ENCODE measurements at regions of chr2 and their contacts with region 1.

Region 1: DNA sequence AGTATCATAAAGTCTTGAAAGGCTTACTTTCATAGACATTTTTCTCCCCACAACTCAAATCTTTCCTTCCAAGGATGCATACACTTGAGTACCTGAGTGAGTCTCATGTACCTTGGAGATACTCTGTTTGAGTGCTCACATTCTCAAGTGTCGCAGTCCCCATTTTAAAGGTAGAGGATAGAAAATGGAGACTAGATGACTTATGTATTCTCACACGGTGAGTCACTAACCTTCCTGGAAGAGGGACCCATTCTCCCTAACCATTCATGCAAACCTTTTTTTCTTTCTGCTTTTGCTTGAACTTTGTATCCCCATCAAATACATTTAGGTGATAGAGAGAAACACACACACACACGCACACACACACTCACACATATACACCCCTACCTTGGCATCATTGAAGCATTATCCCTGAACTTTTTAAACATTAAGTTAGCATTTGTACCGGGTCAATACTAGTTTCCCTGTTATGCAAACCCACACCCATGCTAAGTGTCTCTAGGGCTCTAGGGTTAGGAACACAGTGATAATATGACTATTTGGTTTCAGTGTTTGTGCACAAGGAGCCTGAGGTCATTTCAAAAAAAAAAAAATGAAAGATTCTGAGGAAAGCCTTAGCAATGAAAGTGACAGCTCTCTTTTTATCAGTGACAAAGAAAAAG is 236.2 kb downstream of the IKZF2 start:
- DNase-seq: no peak
- H3K4me3 Mint-ChIP-seq: no peak overlapping the region
- H3K27ac Mint-ChIP-seq: peak overlapping the region; percentile 66
- H3K4me1 Mint-ChIP-seq: peaks cover 12% of the 10 kb centered on the region
- H3K27me3 Mint-ChIP-seq: peaks cover 5% of the 10 kb centered on the region

Region 2: GRCh38 chr2:212421556-212422334 is 493.5 kb before region 1 on chr2:
- CTCF ChIA-PET with region 1: no interaction called
- POLR2A ChIA-PET with region 1: no interaction called
- intact Hi-C with region 1: no loop called
- DNase-seq: no peak
- H3K4me3 Mint-ChIP-seq: no peak overlapping the region
- H3K27ac Mint-ChIP-seq: no peak overlapping the region
- H3K4me1 Mint-ChIP-seq: no peaks in the 10 kb centered on the region
- H3K27me3 Mint-ChIP-seq: no peaks in the 10 kb centered on the region

Region 3: GRCh38 chr2:212928681-212929080 is 13.4 kb after region 1 on chr2:
- CTCF ChIA-PET with region 1: no interaction called
- POLR2A ChIA-PET with region 1: no interaction called
- intact Hi-C with region 1: loop called (anchors 1 kb)
- DNase-seq: no peak
- H3K4me3 Mint-ChIP-seq: no peak overlapping the region
- H3K27ac Mint-ChIP-seq: no peak overlapping the region
- H3K4me1 Mint-ChIP-seq: peaks cover 6% of the 10 kb centered on the region
- H3K27me3 Mint-ChIP-seq: no peaks in the 10 kb centered on the region

Region 4: DNA sequence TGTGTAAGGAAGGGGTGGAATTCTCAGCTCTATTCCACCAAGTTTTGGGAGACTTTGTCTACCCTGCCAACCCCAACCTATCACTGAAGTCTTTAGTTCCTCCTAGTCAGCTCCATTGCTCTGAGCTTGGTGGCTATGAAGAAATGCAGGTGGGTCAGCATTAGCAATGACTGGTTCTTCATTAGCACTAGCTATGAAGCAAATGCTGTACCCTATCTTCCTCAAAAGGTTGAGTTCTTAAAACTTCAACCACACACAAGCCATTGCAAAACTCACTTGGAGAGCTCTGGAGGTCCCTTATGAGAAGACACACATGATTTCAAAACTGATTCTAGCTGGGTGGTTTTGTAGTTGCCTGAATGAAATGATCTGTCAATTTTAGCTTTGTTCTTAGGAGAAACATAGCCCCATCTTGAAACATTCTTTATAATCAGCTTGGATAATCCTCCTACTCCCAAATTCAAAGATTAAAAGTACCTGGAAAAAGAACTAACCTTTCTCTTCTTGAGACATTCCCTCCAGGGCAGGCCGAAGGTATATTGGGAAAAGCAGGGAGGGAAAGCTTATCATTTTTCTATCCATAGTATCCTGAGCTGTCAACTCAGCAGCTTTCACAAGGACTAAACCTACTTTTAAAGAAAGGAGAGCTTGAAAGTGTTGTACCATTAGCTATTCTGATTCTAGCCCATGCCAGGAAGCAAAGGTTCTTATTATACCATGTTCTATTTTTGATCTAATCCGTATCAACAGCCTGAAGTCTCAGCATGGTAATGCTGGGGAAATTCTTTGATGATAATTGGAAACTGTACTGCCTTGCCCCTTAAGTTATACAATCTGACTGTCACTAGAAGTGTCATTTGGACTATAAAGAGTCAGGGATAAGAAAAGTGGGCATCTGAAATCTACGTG is 42.6 kb after region 1 on chr2:
- CTCF ChIA-PET with region 1: no interaction called
- POLR2A ChIA-PET with region 1: no interaction called
- intact Hi-C with region 1: loop called (anchors 1 kb)
- DNase-seq: no peak
- H3K4me3 Mint-ChIP-seq: peak overlapping the region; percentile 7
- H3K27ac Mint-ChIP-seq: peak overlapping the region; percentile 53
- H3K4me1 Mint-ChIP-seq: peaks cover 26% of the 10 kb centered on the region
- H3K27me3 Mint-ChIP-seq: no peaks in the 10 kb centered on the region

Region 5: GRCh38 chr2:212968280-212968679 is 53.0 kb after region 1 on chr2:
- CTCF ChIA-PET with region 1: no interaction called
- POLR2A ChIA-PET with region 1: no interaction called
- intact Hi-C with region 1: loop called (anchors 1 kb)
- DNase-seq: peak; percentile 13
- H3K4me3 Mint-ChIP-seq: no peak overlapping the region
- H3K27ac Mint-ChIP-seq: peak overlapping the region; percentile 44
- H3K4me1 Mint-ChIP-seq: peaks cover 7% of the 10 kb centered on the region
- H3K27me3 Mint-ChIP-seq: no peaks in the 10 kb centered on the region

Region 6: DNA sequence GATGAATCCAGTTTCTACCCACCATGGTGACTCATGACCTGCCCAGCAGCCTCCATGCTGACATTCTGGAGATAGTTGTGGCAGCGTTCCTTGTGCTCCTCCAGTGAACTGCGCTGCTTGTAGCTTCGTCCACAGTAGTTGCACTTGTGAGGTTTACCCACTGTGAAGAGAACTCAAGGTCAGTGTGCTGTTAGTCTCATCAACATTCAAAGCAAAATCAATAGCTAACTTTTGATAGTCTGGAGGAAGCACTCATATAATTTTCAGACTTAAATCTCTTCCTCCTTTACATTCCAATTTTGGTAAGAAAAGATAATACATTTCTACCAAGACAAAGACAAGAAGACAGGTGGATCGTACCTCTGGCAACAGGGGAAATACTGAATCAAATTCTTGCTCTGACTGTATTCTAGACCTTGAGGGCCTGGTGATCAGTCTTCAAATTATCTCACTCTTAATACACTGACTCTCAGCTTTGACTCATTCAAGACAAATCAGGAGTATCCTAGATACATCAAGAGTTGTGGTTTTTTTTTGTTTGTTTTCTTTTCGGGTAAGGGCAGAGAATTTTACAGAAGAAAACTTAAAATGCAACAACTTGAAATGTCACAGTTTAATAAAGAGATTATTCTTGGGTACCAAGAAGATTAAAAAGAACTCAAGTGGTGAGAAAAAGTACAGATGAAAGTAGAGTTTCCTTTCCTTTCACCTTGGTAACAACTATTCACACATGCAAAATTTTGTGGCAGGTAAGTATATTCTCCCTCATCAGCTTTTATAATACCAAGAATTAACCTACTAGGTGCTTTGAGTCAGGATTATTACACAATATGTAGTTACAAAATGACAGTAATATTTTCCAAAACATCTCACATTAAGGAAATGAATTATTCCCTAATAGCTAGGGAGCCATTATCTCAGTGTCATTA is 107.0 kb after region 1 on chr2:
- CTCF ChIA-PET with region 1: no interaction called
- POLR2A ChIA-PET with region 1: no interaction called
- intact Hi-C with region 1: loop called (anchors 1 kb)
- DNase-seq: peak; percentile 24
- H3K4me3 Mint-ChIP-seq: no peak overlapping the region
- H3K27ac Mint-ChIP-seq: peak overlapping the region; percentile 0
- H3K4me1 Mint-ChIP-seq: peaks cover 16% of the 10 kb centered on the region
- H3K27me3 Mint-ChIP-seq: peaks cover 7% of the 10 kb centered on the region